Activated naive CD4-positive, alpha-beta T cell treated with anti-CD3 and anti-CD28 coated beads for 36 hours (primary cell): ENCODE measurements at regions of chr10 and their contacts with region 1.

Region 1: DNA sequence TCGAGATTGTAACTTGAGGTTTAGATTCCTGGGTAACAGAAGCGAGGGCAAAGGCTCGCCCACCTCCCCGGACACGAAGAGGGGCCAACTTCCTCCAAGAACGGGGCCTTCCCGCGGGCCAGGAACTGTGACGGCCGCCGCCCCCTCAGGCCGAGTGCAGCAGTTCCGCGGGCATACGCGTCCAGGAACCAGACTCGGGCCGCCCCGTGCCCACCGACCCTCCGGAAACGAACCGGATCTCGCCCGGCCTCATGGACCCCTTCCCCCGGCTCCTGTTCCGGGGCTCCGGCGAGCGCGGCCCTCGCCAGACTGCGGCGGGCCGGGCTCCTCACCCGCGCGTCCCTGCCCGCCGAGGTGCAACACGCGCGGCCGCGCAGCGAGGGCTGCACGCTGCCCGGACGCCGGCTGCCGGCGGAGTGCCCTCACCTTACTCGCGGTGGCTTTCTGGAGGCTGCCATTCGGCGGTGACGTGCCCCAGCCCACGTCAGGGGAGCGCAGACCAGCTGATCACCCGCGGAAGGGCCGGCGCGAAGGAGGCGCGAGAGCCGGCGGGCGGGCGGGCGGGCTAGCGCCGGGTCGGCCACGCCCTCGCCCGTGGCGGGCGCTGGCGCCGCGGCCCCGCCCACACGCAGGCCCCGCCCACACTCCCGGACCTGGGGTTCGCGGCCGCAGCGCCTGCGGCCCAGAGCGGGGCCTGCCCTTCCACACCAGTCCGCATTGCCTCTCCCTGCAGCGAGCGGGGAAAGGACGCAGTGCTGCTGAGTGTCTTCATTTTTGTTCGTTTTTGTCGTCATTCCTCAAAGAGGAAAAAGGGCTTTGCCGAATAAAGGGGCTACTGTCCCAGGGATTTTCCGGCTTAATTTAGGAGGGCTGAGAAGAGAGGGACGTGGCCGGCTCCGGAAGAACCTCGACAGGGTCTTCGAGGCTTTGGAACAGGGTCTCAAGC is at the start of gene XPNPEP1:
- DNase-seq: peak; percentile 86
- H3K4me3 Mint-ChIP-seq: peak within 1 kb of the TSS; percentile 84
- H3K27ac Mint-ChIP-seq: peak within 1 kb of the TSS; percentile 81
- H3K4me1 Mint-ChIP-seq: peaks cover 53% of the 10 kb centered on the region
- H3K27me3 Mint-ChIP-seq: no peaks in the 10 kb centered on the region
- total RNA-seq, gene XPNPEP1: 52.2 to 52.6 TPM

Region 2: DNA sequence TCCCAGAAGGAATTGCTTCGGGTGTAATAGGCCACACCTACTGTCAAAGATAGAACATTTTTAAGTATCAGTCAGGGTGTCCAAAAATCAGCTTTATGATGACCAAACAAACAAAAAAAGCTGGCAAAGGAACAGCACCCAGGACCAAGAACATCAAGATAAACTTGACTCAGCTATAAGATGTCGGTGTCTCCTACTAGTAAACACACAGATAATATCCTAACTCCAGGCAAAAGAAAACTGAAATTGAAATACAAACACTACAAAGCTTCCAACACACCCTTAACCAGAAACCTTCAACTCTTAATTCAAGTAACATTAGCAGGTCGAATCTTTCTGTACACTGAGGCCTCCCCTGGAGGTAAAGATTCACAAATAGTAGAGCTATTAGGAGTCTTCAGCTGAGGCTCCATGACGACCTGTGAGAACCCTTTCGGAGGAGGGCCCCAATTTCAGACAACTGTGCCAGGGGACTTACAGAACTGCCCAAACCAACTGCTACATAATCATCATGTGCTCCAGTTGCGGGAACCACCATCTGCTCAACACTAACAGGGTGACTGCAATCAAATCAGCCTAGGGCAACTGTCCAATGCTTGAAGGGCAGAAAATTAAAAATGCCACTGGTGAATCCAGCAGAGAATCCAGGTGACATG is 20.2 kb before region 1 on chr10:
- CTCF ChIA-PET with region 1: interaction called, 3 read pairs
- intact Hi-C with region 1: loop called (anchors 2 kb)
- DNase-seq: peak; percentile 41
- H3K4me3 Mint-ChIP-seq: peak overlapping the region; percentile 0
- H3K27ac Mint-ChIP-seq: peak overlapping the region; percentile 77
- H3K4me1 Mint-ChIP-seq: peaks cover 45% of the 10 kb centered on the region
- H3K27me3 Mint-ChIP-seq: no peaks in the 10 kb centered on the region

Region 3: DNA sequence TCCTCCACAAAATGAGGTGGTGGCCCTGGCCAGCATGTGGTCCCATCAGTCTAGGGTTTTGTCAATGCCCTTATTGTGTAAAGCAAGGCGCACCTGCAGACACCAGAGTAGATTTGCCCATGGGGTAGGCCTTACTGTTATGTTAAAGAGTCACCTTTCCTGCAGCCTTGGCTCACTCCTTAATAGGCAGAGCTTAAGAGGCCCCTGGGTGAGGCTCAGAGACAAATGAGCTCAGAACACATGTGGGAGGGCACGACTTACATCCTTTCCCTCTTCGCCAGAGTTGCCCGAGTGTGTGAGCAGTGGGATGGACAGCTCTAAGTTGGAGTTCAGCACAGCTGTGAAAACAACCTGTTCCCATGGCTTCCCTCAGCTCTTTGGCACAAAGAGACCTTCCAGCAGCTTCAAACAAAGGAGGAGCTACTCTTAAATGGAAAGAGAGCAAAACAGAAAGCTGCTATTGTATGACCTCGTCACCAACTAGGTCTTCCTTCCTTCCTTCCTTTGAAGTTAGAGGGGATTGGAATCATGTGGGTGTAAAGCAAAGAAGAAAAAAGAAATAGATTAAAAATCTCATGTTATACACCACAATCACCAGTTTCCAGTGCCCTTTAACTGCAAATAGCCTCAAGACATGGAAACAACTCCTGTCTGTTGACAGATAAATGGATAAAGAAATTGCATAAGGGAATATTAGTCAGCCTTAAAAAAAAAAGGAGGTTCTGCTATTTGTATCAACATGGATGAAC is 11.9 kb after region 1 on chr10:
- CTCF ChIA-PET with region 1: interaction called, 6 read pairs
- intact Hi-C with region 1: loop called (anchors 1 kb)
- DNase-seq: peak; percentile 41
- H3K4me3 Mint-ChIP-seq: peak overlapping the region; percentile 75
- H3K27ac Mint-ChIP-seq: peak overlapping the region; percentile 93
- H3K4me1 Mint-ChIP-seq: peaks cover 74% of the 10 kb centered on the region
- H3K27me3 Mint-ChIP-seq: no peaks in the 10 kb centered on the region